Dorsolateral prefrontal cortex (tissue), 120 donors: ENCODE measurements at regions of chr2 and their contacts with region 1.

Region 1: GRCh38 chr2:68157402-68158133 is at the start of gene PNO1:
- DNase-seq: peak; percentile 89 to 96 (median 94)
- H3K4me3 ChIP-seq: peak within 1 kb of the TSS; percentile 69 to 100 (median 95)
- H3K27ac ChIP-seq: peak within 1 kb of the TSS; percentile 92 to 100 (median 99)
- H3K27me3 ChIP-seq: no peaks in the 10 kb centered on the region
- CTCF ChIP-seq: peak in 17 of 56 donors; percentile 1 to 51 (median 18)
- total RNA-seq, gene PNO1: 4.0 to 14.5 (median 8.7) TPM

Region 2: DNA sequence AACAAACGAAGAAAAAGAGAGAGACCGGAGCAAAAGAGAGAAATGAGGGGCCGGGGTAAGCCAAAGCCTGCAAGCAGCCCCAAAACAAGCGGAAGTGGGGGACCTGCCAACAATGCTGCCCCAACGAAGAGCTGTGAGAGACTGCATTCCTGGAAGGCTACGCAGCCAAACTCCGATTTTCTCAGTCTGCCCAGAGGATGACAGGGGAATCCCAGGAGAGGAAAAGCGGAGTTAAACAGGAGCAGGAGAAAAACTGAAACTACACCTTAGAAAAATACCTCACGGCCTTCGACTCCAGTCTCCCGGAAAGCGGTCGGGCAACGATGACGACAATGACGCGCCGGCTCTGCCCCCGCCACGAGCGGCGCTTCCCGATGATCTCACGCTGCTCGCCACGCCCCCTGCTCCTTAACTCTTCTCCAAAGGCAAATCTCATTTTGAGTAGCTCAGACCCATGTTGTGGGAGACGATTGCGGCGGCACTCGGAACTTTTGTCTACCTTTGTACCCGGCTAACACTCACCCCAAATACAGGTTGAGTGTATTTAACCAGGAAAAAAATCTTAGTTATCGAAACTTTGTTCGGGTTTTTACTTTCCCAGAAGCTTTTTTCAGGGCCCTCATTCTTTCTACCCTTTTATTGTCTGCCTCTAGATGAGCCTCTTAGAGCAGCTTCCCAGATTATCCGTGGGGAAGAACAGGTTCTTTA is 94.7 kb before region 1 on chr2 and contains the start of gene C1D:
- intact Hi-C with region 1: loop called in 1 of 2 experiments (anchors 10 kb)
- DNase-seq: peak; percentile 85 to 93 (median 91)
- H3K4me3 ChIP-seq: peak within 1 kb of the TSS; percentile 47 to 99 (median 85)
- H3K27ac ChIP-seq: peak within 1 kb of the TSS in 57 of 59 donors; percentile 13 to 92 (median 80)
- H3K27me3 ChIP-seq: no peaks in the 10 kb centered on the region
- CTCF ChIP-seq: peak in 34 of 56 donors; percentile 9 to 58 (median 28)
- total RNA-seq, gene C1D: 8.7 to 34.4 (median 19.7) TPM

Region 3: DNA sequence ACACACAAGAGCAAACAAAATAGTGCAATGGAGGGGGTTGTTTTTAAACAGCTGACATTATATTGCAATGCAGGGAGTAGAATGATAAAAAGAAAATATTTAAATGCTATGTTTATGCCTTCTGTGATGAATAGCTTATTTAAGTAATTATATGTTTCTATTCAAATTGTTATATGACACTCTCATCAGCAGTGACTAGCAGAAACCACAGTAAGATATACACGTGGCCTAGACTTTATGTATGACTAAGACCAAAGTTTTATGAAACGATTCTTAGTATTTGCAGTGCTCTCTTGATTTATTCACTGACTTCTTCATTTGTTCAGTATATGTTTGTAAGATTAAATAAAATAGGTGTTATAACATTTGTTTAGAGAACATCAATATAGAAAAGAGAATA is 68.6 kb before region 1 on chr2:
- intact Hi-C with region 1: no loop called
- DNase-seq: no peak
- H3K4me3 ChIP-seq: no peak overlapping the region
- H3K27ac ChIP-seq: no peak overlapping the region
- H3K27me3 ChIP-seq: no peaks in the 10 kb centered on the region
- CTCF ChIP-seq: no peak

Region 4: GRCh38 chr2:68196120-68196716 is 38.6 kb after region 1 on chr2:
- intact Hi-C with region 1: loop called in 1 of 2 experiments (anchors 5 kb)
- DNase-seq: peak in 3 of 10 donors; percentile 9 to 39 (median 25)
- H3K4me3 ChIP-seq: no peak overlapping the region
- H3K27ac ChIP-seq: peak overlapping the region in 1 of 59 donors; percentile 7
- H3K27me3 ChIP-seq: no peaks in the 10 kb centered on the region
- CTCF ChIP-seq: peak in 52 of 56 donors; percentile 45 to 94 (median 80)